ENCODE measurements at regions of chr1 and their contacts with region 1.

Region 1: DNA sequence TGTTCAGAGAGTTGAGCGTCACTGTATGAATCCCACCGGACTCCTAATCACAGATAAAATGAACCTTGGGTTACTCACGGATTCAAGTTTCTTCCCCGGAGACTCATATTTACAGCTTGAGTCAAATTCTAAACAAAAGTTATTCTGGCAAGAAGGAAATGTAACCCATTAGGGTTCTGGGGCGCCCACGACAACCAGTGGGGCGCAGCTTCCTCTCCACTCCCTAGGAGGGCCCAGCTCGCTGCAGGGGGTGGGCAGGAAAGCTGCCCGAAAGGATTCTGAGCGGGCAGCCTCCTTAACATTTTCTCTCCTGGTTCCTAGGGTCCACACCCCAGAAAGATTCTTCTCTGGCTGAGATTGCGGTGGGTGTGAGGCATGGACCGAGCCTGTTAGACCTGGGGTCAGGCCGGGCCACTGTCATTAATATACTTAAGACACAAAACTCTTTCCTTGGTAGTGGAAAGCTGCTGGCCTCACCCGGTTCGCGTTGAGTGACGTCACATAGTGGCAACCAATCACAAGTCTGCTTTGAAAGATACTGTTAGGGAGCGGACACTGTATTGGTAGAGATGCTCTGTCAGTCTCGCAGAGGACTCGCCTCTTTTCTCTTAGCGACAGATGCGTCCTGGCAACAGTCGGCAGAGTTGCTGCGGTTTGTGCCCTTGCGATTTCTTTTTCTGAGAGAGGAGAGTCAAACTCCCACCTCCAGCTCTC is 13.6 kb upstream of the MCOLN3 start:
- DNase-seq: peak; percentile 93
- H3K4me3 Mint-ChIP-seq: peak overlapping the region; percentile 82
- H3K27ac Mint-ChIP-seq: peak overlapping the region; percentile 60
- H3K4me1 Mint-ChIP-seq: peaks cover 10% of the 10 kb centered on the region
- H3K27me3 Mint-ChIP-seq: no peaks in the 10 kb centered on the region

Region 2: DNA sequence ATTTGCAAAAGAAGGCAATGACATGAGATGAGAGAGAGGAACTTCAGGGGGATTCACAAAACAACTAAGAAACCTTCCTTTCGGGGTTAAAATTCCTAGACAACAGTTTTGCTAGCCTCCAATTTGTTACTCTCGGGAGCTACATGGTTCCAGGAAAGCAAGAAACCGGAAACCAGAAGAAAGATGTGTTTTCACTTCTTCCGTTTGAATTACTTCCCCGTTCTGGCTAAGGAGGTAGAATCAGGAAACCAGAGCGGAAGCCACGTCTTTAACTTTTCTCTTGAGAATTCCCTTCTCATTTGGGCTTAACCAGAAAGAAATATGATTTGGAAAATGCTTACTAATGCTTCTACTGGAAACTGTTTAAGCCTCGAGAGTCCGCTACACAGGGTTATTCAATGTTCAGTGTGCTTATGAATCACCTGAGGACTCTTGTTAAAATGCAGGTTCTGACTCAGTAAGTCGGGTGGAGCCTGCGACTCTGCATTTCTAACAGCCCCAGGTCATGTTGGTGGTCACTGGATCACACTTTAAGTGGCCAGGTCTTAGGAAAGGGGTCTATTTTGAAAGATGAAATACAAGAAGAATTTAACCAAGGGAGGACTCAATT is 29.9 kb after region 1 on chr1:
- CTCF ChIA-PET with region 1: no interaction called
- intact Hi-C with region 1: loop called (anchors 2 kb)
- DNase-seq: peak; percentile 43
- H3K4me3 Mint-ChIP-seq: peak overlapping the region; percentile 66
- H3K27ac Mint-ChIP-seq: no peak overlapping the region
- H3K4me1 Mint-ChIP-seq: peaks cover 8% of the 10 kb centered on the region
- H3K27me3 Mint-ChIP-seq: peaks cover 2% of the 10 kb centered on the region

Measured in activated naive CD4-positive, alpha-beta T cell treated with anti-CD3 and anti-CD28 coated beads for 36 hours (primary cell).